ENCODE measurements at regions of chr5 and their contacts with region 1.

Region 1: GRCh38 chr5:169805527-169805934 is 168.5 kb downstream of the DOCK2 start:
- DNase-seq: peak; percentile 94
- ATAC-seq: peak; percentile 90
- H3K4me3 ChIP-seq: peak overlapping the region; percentile 26; the same call in 1 of the 2 replicates
- H3K27ac ChIP-seq: peak overlapping the region; percentile 84
- H3K4me1 ChIP-seq: peaks cover 46% of the 10 kb centered on the region
- H3K27me3 ChIP-seq: no peaks in the 10 kb centered on the region
- CTCF ChIP-seq: no peak
- EP300 ChIP-seq: peak; percentile 87 to 90
- POLR2A ChIP-seq: peak; percentile 72
- RAD21 ChIP-seq: peak; percentile 29; the same call in 1 of the 2 replicates

Region 2: DNA sequence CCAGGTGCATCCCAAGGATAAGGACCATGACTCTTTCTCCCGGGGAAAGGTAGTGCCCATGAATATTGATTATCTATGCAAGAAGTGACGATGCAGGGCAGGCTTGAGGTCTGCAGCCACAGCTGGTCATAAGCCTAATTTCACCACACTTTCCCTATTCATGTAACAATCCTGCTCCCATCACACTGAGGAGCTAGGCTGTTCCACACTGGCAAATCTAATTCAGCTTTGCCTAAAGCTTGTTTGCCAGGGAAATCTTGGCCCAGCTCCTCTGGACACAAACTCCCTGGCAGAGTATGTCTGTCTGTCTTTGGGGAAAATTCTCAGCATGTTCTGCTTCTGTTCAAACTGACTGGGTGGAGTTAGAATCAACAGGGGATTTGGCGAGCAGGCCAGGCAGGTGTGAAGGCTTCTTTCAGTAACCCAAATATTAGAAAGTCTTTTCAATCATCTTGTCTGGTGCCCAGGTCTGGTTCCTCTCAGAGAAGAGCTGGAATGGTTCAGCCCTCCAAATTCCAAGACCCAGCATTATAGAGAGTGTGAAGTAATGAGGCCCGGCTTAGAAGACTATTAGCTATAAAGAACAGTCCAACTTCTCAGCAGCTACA is 310.5 kb before region 1 on chr5:
- CTCF ChIA-PET with region 1: no interaction called
- POLR2A ChIA-PET with region 1: no interaction called
- RAD21 ChIA-PET with region 1: no interaction called
- SMC1A ChIA-PET with region 1: no interaction called
- in situ Hi-C with region 1: no loop called
- intact Hi-C with region 1: no loop called
- DNase-seq: no peak
- ATAC-seq: no peak
- H3K4me3 ChIP-seq: no peak overlapping the region
- H3K27ac ChIP-seq: no peak overlapping the region
- H3K4me1 ChIP-seq: no peaks in the 10 kb centered on the region
- H3K27me3 ChIP-seq: peaks cover 0 to under 1% of the 10 kb centered on the region in 2 experiments; a peak in 1 of 4 replicates
- CTCF ChIP-seq: no peak
- EP300 ChIP-seq: no peak
- POLR2A ChIP-seq: no peak
- RAD21 ChIP-seq: no peak

Region 3: GRCh38 chr5:169670769-169671525 is 134.6 kb before region 1 on chr5:
- CTCF ChIA-PET with region 1: no interaction called
- POLR2A ChIA-PET with region 1: interaction called, 6 read pairs
- RAD21 ChIA-PET with region 1: interaction called, 19 read pairs
- SMC1A ChIA-PET with region 1: interaction called, 16 read pairs
- in situ Hi-C with region 1: no loop called
- intact Hi-C with region 1: no loop called
- DNase-seq: peak; percentile 80
- ATAC-seq: peak; percentile 98
- H3K4me3 ChIP-seq: peak overlapping the region; percentile 42; the same call in 1 of the 2 replicates
- H3K27ac ChIP-seq: peak overlapping the region; percentile 95
- H3K4me1 ChIP-seq: peaks cover 33% of the 10 kb centered on the region
- H3K27me3 ChIP-seq: no peaks in the 10 kb centered on the region
- CTCF ChIP-seq: no peak
- EP300 ChIP-seq: peak; percentile 67 to 69; a peak in 3 of 4 replicates
- POLR2A ChIP-seq: no peak
- RAD21 ChIP-seq: peak; percentile 20; the same call in 1 of the 2 replicates

Region 4: GRCh38 chr5:169716278-169716677 is 89.3 kb before region 1 on chr5:
- CTCF ChIA-PET with region 1: interaction called, 23 read pairs
- POLR2A ChIA-PET with region 1: interaction called, 28 read pairs
- RAD21 ChIA-PET with region 1: interaction called, 88 read pairs
- SMC1A ChIA-PET with region 1: interaction called, 103 read pairs
- in situ Hi-C with region 1: no loop called
- intact Hi-C with region 1: loop called (anchors 1 kb)
- DNase-seq: no peak
- ATAC-seq: peak; percentile 11; the same call in 2 of the 3 replicates
- H3K4me3 ChIP-seq: no peak overlapping the region
- H3K27ac ChIP-seq: peak overlapping the region; percentile 22
- H3K4me1 ChIP-seq: peaks cover 17% of the 10 kb centered on the region
- H3K27me3 ChIP-seq: no peaks in the 10 kb centered on the region
- CTCF ChIP-seq: no peak
- EP300 ChIP-seq: no peak; a peak in 1 of 4 replicates
- POLR2A ChIP-seq: no peak
- RAD21 ChIP-seq: no peak

Region 5: GRCh38 chr5:169753795-169754194 is 51.7 kb before region 1 on chr5:
- CTCF ChIA-PET with region 1: interaction called, 5 read pairs
- POLR2A ChIA-PET with region 1: interaction called, 8 read pairs
- RAD21 ChIA-PET with region 1: interaction called, 36 read pairs
- SMC1A ChIA-PET with region 1: interaction called, 169 read pairs
- in situ Hi-C with region 1: no loop called
- intact Hi-C with region 1: loop called (anchors 1 kb)
- DNase-seq: no peak
- ATAC-seq: peak; percentile 18; the same call in 2 of the 3 replicates
- H3K4me3 ChIP-seq: no peak overlapping the region
- H3K27ac ChIP-seq: no peak overlapping the region
- H3K4me1 ChIP-seq: no peaks in the 10 kb centered on the region
- H3K27me3 ChIP-seq: no peaks in the 10 kb centered on the region
- CTCF ChIP-seq: no peak
- EP300 ChIP-seq: no peak
- POLR2A ChIP-seq: no peak
- RAD21 ChIP-seq: no peak

Region 6: GRCh38 chr5:169778622-169779596 is 26.6 kb before region 1 on chr5:
- CTCF ChIA-PET with region 1: interaction called, 40 read pairs
- POLR2A ChIA-PET with region 1: interaction called, 47 read pairs
- RAD21 ChIA-PET with region 1: interaction called, 130 read pairs
- SMC1A ChIA-PET with region 1: interaction called, 368 read pairs
- in situ Hi-C with region 1: no loop called
- intact Hi-C with region 1: loop called (anchors 1 kb)
- DNase-seq: peak; percentile 87
- ATAC-seq: peak; percentile 97
- H3K4me3 ChIP-seq: no peak overlapping the region
- H3K27ac ChIP-seq: peak overlapping the region; percentile 80
- H3K4me1 ChIP-seq: peaks cover 29% of the 10 kb centered on the region
- H3K27me3 ChIP-seq: no peaks in the 10 kb centered on the region
- CTCF ChIP-seq: no peak
- EP300 ChIP-seq: peak; percentile 60 to 82; a peak in 2 of 4 replicates
- POLR2A ChIP-seq: no peak
- RAD21 ChIP-seq: no peak

Region 7: GRCh38 chr5:169838688-169839087 is 33.2 kb after region 1 on chr5:
- CTCF ChIA-PET with region 1: interaction called, 5 read pairs
- POLR2A ChIA-PET with region 1: no interaction called
- RAD21 ChIA-PET with region 1: interaction called, 20 read pairs
- SMC1A ChIA-PET with region 1: interaction called, 18 read pairs
- in situ Hi-C with region 1: no loop called
- intact Hi-C with region 1: no loop called
- DNase-seq: peak; percentile 45
- ATAC-seq: peak; percentile 92
- H3K4me3 ChIP-seq: no peak overlapping the region
- H3K27ac ChIP-seq: peak overlapping the region; percentile 76
- H3K4me1 ChIP-seq: peaks cover 28% of the 10 kb centered on the region
- H3K27me3 ChIP-seq: no peaks in the 10 kb centered on the region
- CTCF ChIP-seq: no peak
- EP300 ChIP-seq: no peak; a peak in 1 of 4 replicates
- POLR2A ChIP-seq: no peak
- RAD21 ChIP-seq: no peak

Region 8: GRCh38 chr5:170720984-170721383 is 915.5 kb after region 1 on chr5:
- CTCF ChIA-PET with region 1: no interaction called
- POLR2A ChIA-PET with region 1: no interaction called
- RAD21 ChIA-PET with region 1: no interaction called
- SMC1A ChIA-PET with region 1: no interaction called
- in situ Hi-C with region 1: no loop called
- intact Hi-C with region 1: no loop called
- DNase-seq: no peak
- ATAC-seq: no peak
- H3K4me3 ChIP-seq: no peak overlapping the region
- H3K27ac ChIP-seq: no peak overlapping the region
- H3K4me1 ChIP-seq: no peaks in the 10 kb centered on the region
- H3K27me3 ChIP-seq: peaks cover 0 to 7% of the 10 kb centered on the region in 2 experiments; a peak in 2 of 4 replicates
- CTCF ChIP-seq: no peak
- EP300 ChIP-seq: no peak
- POLR2A ChIP-seq: no peak
- RAD21 ChIP-seq: no peak

Measured in GM12878 (cell line).